Esophagus squamous epithelium (tissue), 5 donors: ENCODE measurements at regions of chr6 and their contacts with region 1.

Region 1: GRCh38 chr6:34414999-34415858 is 10.6 kb downstream of the RPS10 start:
- DNase-seq: no peak
- H3K4me3 ChIP-seq: no peak overlapping the region
- H3K27ac ChIP-seq: peak overlapping the region; percentile 44 to 80 (median 74)
- H3K4me1 ChIP-seq: peaks cover 6 to 27% (median 9%) of the 10 kb centered on the region in 3 donors
- H3K27me3 ChIP-seq: no peaks in the 10 kb centered on the region
- CTCF ChIP-seq: peak; percentile 53 to 78 (median 69)
- POLR2A ChIP-seq: no peak

Region 2: GRCh38 chr6:34196126-34196830 is 219.0 kb before region 1 on chr6:
- intact Hi-C with region 1: loop called (anchors 5 kb)
- DNase-seq: peak; percentile 46
- H3K4me3 ChIP-seq: peak overlapping the region; percentile 37 to 78 (median 54)
- H3K27ac ChIP-seq: peak overlapping the region in 2 of 4 donors; percentile 26 to 51
- H3K4me1 ChIP-seq: peaks cover 0 to 12% (median 9%) of the 10 kb centered on the region in 3 donors
- H3K27me3 ChIP-seq: no peaks in the 10 kb centered on the region
- CTCF ChIP-seq: peak; percentile 93 to 98 (median 97)
- POLR2A ChIP-seq: no peak

Region 3: GRCh38 chr6:34249552-34250261 is 165.5 kb before region 1 on chr6:
- intact Hi-C with region 1: loop called (anchors 5 kb)
- DNase-seq: no peak
- H3K4me3 ChIP-seq: peak overlapping the region; percentile 69 to 90 (median 76)
- H3K27ac ChIP-seq: peak overlapping the region; percentile 91 to 94 (median 94)
- H3K4me1 ChIP-seq: peaks cover 23 to 53% (median 24%) of the 10 kb centered on the region in 3 donors
- H3K27me3 ChIP-seq: no peaks in the 10 kb centered on the region
- CTCF ChIP-seq: no peak
- POLR2A ChIP-seq: no peak

Region 4: GRCh38 chr6:34350137-34350933 is 64.9 kb before region 1 on chr6:
- intact Hi-C with region 1: no loop called
- DNase-seq: no peak
- H3K4me3 ChIP-seq: no peak overlapping the region
- H3K27ac ChIP-seq: no peak overlapping the region
- H3K4me1 ChIP-seq: peaks cover 0 to 15% (median 0%) of the 10 kb centered on the region in 3 donors
- H3K27me3 ChIP-seq: no peaks in the 10 kb centered on the region
- CTCF ChIP-seq: no peak
- POLR2A ChIP-seq: no peak

Region 5: GRCh38 chr6:34491091-34491430 is 75.8 kb after region 1 on chr6:
- intact Hi-C with region 1: no loop called
- DNase-seq: no peak
- H3K4me3 ChIP-seq: peak overlapping the region in 2 of 4 donors; percentile 4 to 24
- H3K27ac ChIP-seq: peak overlapping the region in 1 of 4 donors; percentile 54
- H3K4me1 ChIP-seq: peaks cover 0 to 10% (median 4%) of the 10 kb centered on the region in 3 donors
- H3K27me3 ChIP-seq: no peaks in the 10 kb centered on the region
- CTCF ChIP-seq: no peak
- POLR2A ChIP-seq: no peak